MCF 10A (cell line): ENCODE measurements at regions of chr13 and their contacts with region 1.

Region 1: DNA sequence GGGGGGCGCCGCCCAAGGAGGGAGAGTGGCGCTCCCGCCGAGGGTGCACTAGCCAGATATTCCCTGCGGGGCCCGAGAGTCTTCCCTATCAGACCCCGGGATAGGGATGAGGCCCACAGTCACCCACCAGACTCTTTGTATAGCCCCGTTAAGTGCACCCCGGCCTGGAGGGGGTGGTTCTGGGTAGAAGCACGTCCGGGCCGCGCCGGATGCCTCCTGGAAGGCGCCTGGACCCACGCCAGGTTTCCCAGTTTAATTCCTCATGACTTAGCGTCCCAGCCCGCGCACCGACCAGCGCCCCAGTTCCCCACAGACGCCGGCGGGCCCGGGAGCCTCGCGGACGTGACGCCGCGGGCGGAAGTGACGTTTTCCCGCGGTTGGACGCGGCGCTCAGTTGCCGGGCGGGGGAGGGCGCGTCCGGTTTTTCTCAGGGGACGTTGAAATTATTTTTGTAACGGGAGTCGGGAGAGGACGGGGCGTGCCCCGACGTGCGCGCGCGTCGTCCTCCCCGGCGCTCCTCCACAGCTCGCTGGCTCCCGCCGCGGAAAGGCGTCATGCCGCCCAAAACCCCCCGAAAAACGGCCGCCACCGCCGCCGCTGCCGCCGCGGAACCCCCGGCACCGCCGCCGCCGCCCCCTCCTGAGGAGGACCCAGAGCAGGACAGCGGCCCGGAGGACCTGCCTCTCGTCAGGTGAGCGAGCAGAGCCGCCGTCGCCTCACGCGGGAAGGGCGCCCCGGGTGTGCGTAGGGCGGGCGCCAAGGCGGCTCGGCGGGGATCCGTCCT is at the start of gene RB1:
- DNase-seq: peak; percentile 92
- H3K4me3 Mint-ChIP-seq: peak within 1 kb of the TSS; percentile 86
- H3K27ac Mint-ChIP-seq: peak within 1 kb of the TSS; percentile 97
- H3K4me1 Mint-ChIP-seq: peaks cover 16% of the 10 kb centered on the region
- H3K27me3 Mint-ChIP-seq: no peaks in the 10 kb centered on the region
- CTCF ChIP-seq: no peak
- total RNA-seq, gene RB1: 40.7 and 43.4 TPM in 2 replicates

Region 2: DNA sequence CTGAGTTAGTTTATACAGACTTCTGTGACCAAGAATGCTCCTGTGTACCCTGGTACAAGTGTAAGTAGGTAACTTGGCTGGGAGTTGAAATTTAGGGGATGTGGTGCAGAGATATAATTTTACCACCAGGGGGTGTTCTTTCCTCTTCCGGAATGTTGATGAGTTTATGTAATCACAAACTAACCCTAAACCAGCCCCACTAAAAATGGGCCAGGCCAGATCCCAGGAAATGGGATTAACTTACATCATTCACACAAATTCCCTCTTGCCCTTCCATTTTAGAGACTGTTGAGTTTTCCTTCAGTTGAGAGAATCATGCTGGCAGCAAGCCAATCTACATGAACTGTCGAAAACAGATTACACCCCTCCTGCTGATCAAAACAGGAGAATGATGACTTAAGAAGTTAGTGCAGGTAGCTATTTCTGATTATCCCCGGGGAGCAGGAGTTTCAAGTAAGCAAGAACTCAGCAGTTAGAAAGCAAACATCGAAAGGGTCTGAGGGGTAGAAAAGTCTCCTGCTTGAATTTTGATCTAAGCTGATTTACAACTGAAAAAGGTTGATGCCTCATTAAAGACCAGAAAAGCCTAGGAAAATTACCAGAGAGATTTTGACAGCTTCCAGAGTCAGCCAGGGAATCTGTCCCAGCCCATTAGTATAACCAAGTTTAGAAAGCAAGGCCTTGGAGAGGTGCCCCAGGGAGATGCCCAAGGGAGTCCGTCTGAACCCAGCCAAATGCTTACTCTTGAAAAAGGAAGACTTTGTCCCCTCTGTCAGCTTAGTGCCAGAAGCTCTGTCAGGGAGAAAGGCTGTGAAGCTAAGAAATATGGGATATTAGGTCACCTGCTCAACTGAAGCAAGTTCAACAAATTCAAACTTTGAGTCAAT is 176.4 kb before region 1 on chr13:
- CTCF ChIA-PET with region 1: interaction called, 5 read pairs
- POLR2A ChIA-PET with region 1: interaction called, 8 read pairs
- intact Hi-C with region 1: loop called (anchors 1 kb)
- DNase-seq: peak; percentile 82
- H3K4me3 Mint-ChIP-seq: no peak overlapping the region
- H3K27ac Mint-ChIP-seq: peak overlapping the region; percentile 64
- H3K4me1 Mint-ChIP-seq: peaks cover 21% of the 10 kb centered on the region
- H3K27me3 Mint-ChIP-seq: no peaks in the 10 kb centered on the region
- CTCF ChIP-seq: peak; percentile 64

Region 3: DNA sequence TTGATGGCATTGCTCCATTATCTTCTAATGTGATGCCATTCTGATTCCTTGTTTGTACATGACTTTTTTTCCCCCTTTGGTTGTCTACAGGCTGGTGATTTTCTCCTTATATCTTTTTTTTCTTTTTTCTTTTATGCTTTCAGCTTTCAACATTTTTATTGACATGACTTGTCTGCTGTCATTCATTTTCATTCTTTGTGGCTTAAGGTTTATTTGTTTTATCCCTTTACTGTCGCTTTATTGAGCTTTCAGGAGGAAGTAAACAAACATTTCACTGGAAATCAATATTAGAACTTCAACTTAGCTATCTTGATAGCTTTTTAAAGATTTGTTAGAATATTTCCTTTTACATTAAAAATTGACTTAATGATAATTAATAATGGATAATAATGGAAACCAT is 60.9 kb before region 1 on chr13:
- CTCF ChIA-PET with region 1: interaction called, 3 read pairs
- POLR2A ChIA-PET with region 1: interaction called, 92 read pairs
- intact Hi-C with region 1: no loop called
- DNase-seq: no peak
- H3K4me3 Mint-ChIP-seq: no peak overlapping the region
- H3K27ac Mint-ChIP-seq: no peak overlapping the region
- H3K4me1 Mint-ChIP-seq: peaks cover 9% of the 10 kb centered on the region
- H3K27me3 Mint-ChIP-seq: no peaks in the 10 kb centered on the region
- CTCF ChIP-seq: no peak

Region 4: DNA sequence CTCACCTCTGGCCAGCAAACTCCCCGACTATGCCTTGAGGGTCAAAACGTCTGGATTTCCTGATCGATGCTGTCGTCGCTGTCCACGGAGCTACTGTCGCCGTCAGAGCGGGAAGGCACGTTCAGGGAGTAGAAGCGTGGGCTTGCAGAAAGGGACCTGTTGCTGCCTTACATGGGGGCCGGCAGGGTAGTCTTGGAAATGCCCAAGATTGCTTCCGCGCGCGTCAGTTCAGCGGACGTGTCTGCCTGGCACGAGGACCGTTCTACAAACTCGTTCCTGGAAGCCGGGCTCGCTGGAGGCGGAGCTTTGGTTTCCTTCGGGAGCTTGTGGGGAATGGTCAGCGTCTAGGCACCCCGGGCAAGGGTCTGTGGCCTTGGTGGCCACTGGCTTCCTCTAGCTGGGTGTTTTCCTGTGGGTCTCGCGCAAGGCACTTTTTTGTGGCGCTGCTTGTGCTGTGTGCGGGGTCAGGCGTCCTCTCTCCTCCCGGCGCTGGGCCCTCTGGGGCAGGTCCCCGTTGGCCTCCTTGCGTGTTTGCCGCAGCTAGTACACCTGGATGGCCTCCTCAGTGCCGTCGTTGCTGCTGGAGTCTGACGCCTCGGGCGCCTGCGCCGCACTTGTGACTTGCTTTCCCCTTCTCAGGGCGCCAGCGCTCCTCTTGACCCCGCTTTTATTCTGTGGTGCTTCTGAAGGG is 15.4 kb after region 1 on chr13:
- CTCF ChIA-PET with region 1: interaction called, 3 read pairs
- POLR2A ChIA-PET with region 1: interaction called, 10 read pairs
- intact Hi-C with region 1: no loop called
- DNase-seq: no peak
- H3K4me3 Mint-ChIP-seq: no peak overlapping the region
- H3K27ac Mint-ChIP-seq: no peak overlapping the region
- H3K4me1 Mint-ChIP-seq: no peaks in the 10 kb centered on the region
- H3K27me3 Mint-ChIP-seq: no peaks in the 10 kb centered on the region
- CTCF ChIP-seq: no peak